CD8-positive, alpha-beta memory T cell (primary cell): ENCODE measurements at regions of chr17 and their contacts with region 1.

Region 1: GRCh38 chr17:74212913-74213791 is at the start of gene TTYH2:
- DNase-seq: peak; percentile 59 to 79 (median 72)
- H3K4me3 ChIP-seq: peak within 1 kb of the TSS; percentile 68
- H3K4me3 Mint-ChIP-seq: peak within 1 kb of the TSS; percentile 87 to 95 (median 90)
- H3K27ac ChIP-seq: peak within 1 kb of the TSS; percentile 39
- H3K27ac Mint-ChIP-seq: peak within 1 kb of the TSS; percentile 72 to 100 (median 86)
- H3K4me1 ChIP-seq: peaks cover 33% of the 10 kb centered on the region
- H3K4me1 Mint-ChIP-seq: peaks cover 48 to 78% (median 51%) of the 10 kb centered on the region in 3 donors
- H3K27me3 ChIP-seq: no peaks in the 10 kb centered on the region
- H3K27me3 Mint-ChIP-seq: peaks cover 0 to 3% of the 10 kb centered on the region in 2 donors
- total RNA-seq, gene TTYH2: 17.1 to 17.4 TPM

Region 2: DNA sequence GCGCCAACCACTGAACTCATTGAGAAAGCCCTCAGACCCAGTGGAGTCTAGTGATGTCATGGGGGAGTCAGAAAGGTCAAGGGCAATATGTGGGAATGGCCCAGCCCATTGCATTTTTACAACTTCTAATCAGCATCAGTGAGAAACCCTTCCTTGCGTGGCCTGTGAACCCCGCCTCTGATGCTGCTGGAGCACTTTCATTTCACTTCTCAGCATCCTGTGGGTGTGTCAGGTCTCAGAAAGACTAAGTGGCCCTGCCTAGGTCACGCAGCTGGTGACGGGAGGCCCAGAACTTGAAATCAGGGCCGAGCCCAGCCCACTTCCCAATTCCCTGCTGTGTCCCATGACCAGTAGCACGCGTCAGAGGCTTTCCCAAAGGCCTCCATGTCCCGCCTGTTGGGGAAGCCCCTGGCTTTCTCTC is 67.0 kb after region 1 on chr17:
- CTCF ChIA-PET with region 1: interaction called, 16 read pairs
- POLR2A ChIA-PET with region 1: interaction called, 9 read pairs
- DNase-seq: peak in 4 of 5 donors; percentile 46 to 73 (median 59)
- H3K4me3 ChIP-seq: peak overlapping the region; percentile 36
- H3K4me3 Mint-ChIP-seq: peak overlapping the region in 6 of 7 donors; percentile 9 to 61 (median 44)
- H3K27ac ChIP-seq: peak overlapping the region; percentile 88
- H3K27ac Mint-ChIP-seq: peak overlapping the region; percentile 77 to 99 (median 96)
- H3K4me1 ChIP-seq: peaks cover 60% of the 10 kb centered on the region
- H3K4me1 Mint-ChIP-seq: peaks cover 40 to 79% (median 58%) of the 10 kb centered on the region in 3 donors
- H3K27me3 ChIP-seq: no peaks in the 10 kb centered on the region
- H3K27me3 Mint-ChIP-seq: no peaks in the 10 kb centered on the region

Region 3: GRCh38 chr17:74296548-74296936 is 83.4 kb after region 1 on chr17:
- CTCF ChIA-PET with region 1: interaction called, 13 read pairs
- POLR2A ChIA-PET with region 1: interaction called, 4 read pairs
- DNase-seq: peak in 1 of 5 donors; percentile 60
- H3K4me3 ChIP-seq: no peak overlapping the region
- H3K4me3 Mint-ChIP-seq: peak overlapping the region in 1 of 7 donors; percentile 54
- H3K27ac ChIP-seq: peak overlapping the region; percentile 75
- H3K27ac Mint-ChIP-seq: peak overlapping the region in 3 of 8 donors; percentile 29 to 73 (median 55)
- H3K4me1 ChIP-seq: peaks cover 5% of the 10 kb centered on the region
- H3K4me1 Mint-ChIP-seq: peaks cover 19 to 22% (median 22%) of the 10 kb centered on the region in 3 donors
- H3K27me3 ChIP-seq: no peaks in the 10 kb centered on the region
- H3K27me3 Mint-ChIP-seq: no peaks in the 10 kb centered on the region

Region 4: GRCh38 chr17:74361230-74362068 is 148.3 kb after region 1 on chr17 and contains the start of gene BTBD17:
- CTCF ChIA-PET with region 1: interaction called, 13 read pairs
- POLR2A ChIA-PET with region 1: no interaction called
- DNase-seq: peak in 3 of 5 donors; percentile 13 to 62 (median 18)
- H3K4me3 ChIP-seq: no peak within 1 kb of the TSS
- H3K4me3 Mint-ChIP-seq: no peak within 1 kb of the TSS
- H3K27ac ChIP-seq: no peak within 1 kb of the TSS
- H3K27ac Mint-ChIP-seq: no peak within 1 kb of the TSS
- H3K4me1 ChIP-seq: no peaks in the 10 kb centered on the region
- H3K4me1 Mint-ChIP-seq: peaks cover 4 to 10% (median 6%) of the 10 kb centered on the region in 3 donors
- H3K27me3 ChIP-seq: peaks cover 17% of the 10 kb centered on the region
- H3K27me3 Mint-ChIP-seq: peaks cover 19 to 31% of the 10 kb centered on the region in 2 donors
- total RNA-seq, gene BTBD17: not detected